Activated CD8-positive, alpha-beta T cell treated with anti-CD3 and anti-CD28 coated beads, Interleukin-2, amount 10 ng/mL, durations not matched to agents 7 days and 5 days (primary cell): ENCODE measurements at regions of chr12 and their contacts with region 1.

Region 1: GRCh38 chr12:95918194-95918993 is 24.0 kb downstream of the CCDC38 start:
- DNase-seq: peak; percentile 63
- ATAC-seq: peak; percentile 96
- H3K4me3 Mint-ChIP-seq: no peak overlapping the region
- H3K27ac Mint-ChIP-seq: no peak overlapping the region
- H3K4me1 Mint-ChIP-seq: no peaks in the 10 kb centered on the region
- H3K27me3 Mint-ChIP-seq: peaks cover 12% of the 10 kb centered on the region

Region 2: GRCh38 chr12:95959107-95959506 is 40.7 kb after region 1 on chr12:
- CTCF ChIA-PET with region 1: interaction called, 15 read pairs
- POLR2A ChIA-PET with region 1: no interaction called
- DNase-seq: no peak
- ATAC-seq: peak; percentile 47
- H3K4me3 Mint-ChIP-seq: no peak overlapping the region
- H3K27ac Mint-ChIP-seq: no peak overlapping the region
- H3K4me1 Mint-ChIP-seq: no peaks in the 10 kb centered on the region
- H3K27me3 Mint-ChIP-seq: no peaks in the 10 kb centered on the region

Region 3: DNA sequence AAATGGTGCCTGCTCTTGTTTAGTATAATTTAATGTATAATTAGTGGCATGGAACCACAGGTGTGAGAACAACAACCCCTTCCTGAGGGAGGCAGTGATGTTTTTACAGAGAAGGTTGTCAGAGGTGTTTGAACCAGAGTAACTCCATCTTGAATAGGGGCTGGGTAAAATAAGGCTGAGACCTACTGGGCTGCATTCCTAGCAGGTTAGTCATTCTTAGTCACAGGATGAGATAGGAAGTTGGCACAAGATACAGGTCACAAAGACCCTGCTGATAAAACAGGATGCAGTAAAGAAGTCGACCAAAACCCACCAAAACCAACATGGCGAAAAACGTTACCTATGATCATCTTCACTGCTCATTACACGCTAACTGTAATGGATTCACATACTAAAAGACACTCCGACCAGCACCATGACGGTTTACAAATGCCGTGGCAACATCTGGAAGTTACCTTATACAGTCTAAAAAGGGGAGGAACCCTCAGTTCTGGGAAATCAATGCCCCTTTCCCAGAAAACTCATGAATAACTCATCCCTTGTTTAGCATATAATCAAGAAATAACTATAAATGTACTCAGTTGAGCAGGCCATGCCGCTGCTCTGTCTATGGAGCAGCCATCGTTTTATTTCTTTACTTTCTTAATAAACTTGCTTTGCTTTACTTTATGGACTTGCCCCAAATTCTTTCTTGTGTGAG is 164.8 kb after region 1 on chr12:
- CTCF ChIA-PET with region 1: no interaction called
- POLR2A ChIA-PET with region 1: no interaction called
- DNase-seq: no peak
- ATAC-seq: no peak
- H3K4me3 Mint-ChIP-seq: no peak overlapping the region
- H3K27ac Mint-ChIP-seq: no peak overlapping the region
- H3K4me1 Mint-ChIP-seq: no peaks in the 10 kb centered on the region
- H3K27me3 Mint-ChIP-seq: peaks cover 2% of the 10 kb centered on the region